Activated CD4-positive, alpha-beta T cell treated with anti-CD3 and anti-CD28 coated beads, Interleukin-2, amount 10 ng/mL, durations not matched to agents 24 days and 14 days (primary cell): ENCODE measurements at regions of chr22 and their contacts with region 1.

Region 1: DNA sequence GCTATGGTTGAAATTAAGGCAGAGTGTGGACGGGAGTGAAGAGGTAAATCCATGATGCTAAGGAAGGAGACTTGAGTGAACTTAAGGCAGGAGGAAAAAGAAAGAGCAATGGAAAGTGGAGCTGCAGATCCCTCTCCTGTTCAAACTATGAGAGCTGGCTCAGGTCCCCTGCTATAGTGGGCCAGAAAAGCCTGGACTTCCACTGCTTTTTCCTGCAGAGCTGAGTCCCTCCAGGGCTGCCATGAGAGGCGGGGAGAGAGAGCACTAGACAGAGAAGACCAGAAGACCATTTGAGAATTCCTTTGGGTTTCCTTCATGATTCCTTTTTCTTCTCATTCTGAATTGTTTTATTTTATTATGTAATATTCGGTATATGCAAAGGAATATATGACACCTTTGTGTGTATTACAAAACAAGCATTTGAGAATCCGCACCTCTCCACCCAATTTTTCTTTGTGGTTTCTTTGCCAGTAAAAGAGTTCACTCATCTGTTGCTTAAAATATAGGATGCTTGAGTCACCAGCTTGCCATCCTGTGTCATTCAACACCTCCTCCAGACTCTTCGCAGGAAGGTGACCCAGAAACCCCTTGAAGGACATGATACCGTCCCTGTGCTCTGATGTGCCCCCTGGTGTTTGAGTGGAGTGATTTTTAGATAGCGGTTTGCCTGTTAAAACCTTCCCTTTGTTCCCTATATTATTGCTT is 24.4 kb downstream of the SREBF2 start:
- DNase-seq: peak; percentile 91
- H3K4me3 Mint-ChIP-seq: peak overlapping the region; percentile 60
- H3K27ac Mint-ChIP-seq: peak overlapping the region; percentile 96
- H3K4me1 Mint-ChIP-seq: peaks cover 64% of the 10 kb centered on the region
- H3K27me3 Mint-ChIP-seq: no peaks in the 10 kb centered on the region

Region 2: GRCh38 chr22:41672775-41673509 is 184.4 kb before region 1 on chr22:
- intact Hi-C with region 1: no loop called
- DNase-seq: no peak
- H3K4me3 Mint-ChIP-seq: no peak overlapping the region
- H3K27ac Mint-ChIP-seq: no peak overlapping the region
- H3K4me1 Mint-ChIP-seq: peaks cover 16% of the 10 kb centered on the region
- H3K27me3 Mint-ChIP-seq: no peaks in the 10 kb centered on the region

Region 3: GRCh38 chr22:41697126-41697775 is 160.1 kb before region 1 on chr22:
- intact Hi-C with region 1: loop called (anchors 5 kb)
- DNase-seq: peak; percentile 97
- H3K4me3 Mint-ChIP-seq: peak overlapping the region; percentile 34
- H3K27ac Mint-ChIP-seq: peak overlapping the region; percentile 70
- H3K4me1 Mint-ChIP-seq: peaks cover 15% of the 10 kb centered on the region
- H3K27me3 Mint-ChIP-seq: peaks cover 2% of the 10 kb centered on the region

Region 4: GRCh38 chr22:41780746-41781505 is 76.4 kb before region 1 on chr22:
- intact Hi-C with region 1: loop called (anchors 2 kb)
- DNase-seq: peak; percentile 97
- H3K4me3 Mint-ChIP-seq: peak overlapping the region; percentile 83
- H3K27ac Mint-ChIP-seq: peak overlapping the region; percentile 97
- H3K4me1 Mint-ChIP-seq: peaks cover 36% of the 10 kb centered on the region
- H3K27me3 Mint-ChIP-seq: no peaks in the 10 kb centered on the region

Region 5: GRCh38 chr22:41808400-41808799 is 48.9 kb before region 1 on chr22:
- intact Hi-C with region 1: no loop called
- DNase-seq: no peak
- H3K4me3 Mint-ChIP-seq: no peak overlapping the region
- H3K27ac Mint-ChIP-seq: no peak overlapping the region
- H3K4me1 Mint-ChIP-seq: peaks cover 14% of the 10 kb centered on the region
- H3K27me3 Mint-ChIP-seq: no peaks in the 10 kb centered on the region

Region 6: GRCh38 chr22:41822317-41823060 is 34.8 kb before region 1 on chr22:
- intact Hi-C with region 1: loop called (anchors 1 kb)
- DNase-seq: peak; percentile 83
- H3K4me3 Mint-ChIP-seq: no peak overlapping the region
- H3K27ac Mint-ChIP-seq: peak overlapping the region; percentile 89
- H3K4me1 Mint-ChIP-seq: peaks cover 28% of the 10 kb centered on the region
- H3K27me3 Mint-ChIP-seq: no peaks in the 10 kb centered on the region

Region 7: GRCh38 chr22:41842996-41843970 is 14.0 kb before region 1 on chr22:
- intact Hi-C with region 1: loop called (anchors 1 kb)
- DNase-seq: no peak
- H3K4me3 Mint-ChIP-seq: peak overlapping the region; percentile 33
- H3K27ac Mint-ChIP-seq: peak overlapping the region; percentile 87
- H3K4me1 Mint-ChIP-seq: peaks cover 73% of the 10 kb centered on the region
- H3K27me3 Mint-ChIP-seq: no peaks in the 10 kb centered on the region